ENCODE measurements at regions of chr12 and their contacts with region 1.

Region 1: GRCh38 chr12:8078398-8078797 is 3.7 kb upstream of the NECAP1 start:
- DNase-seq: peak; percentile 56
- ATAC-seq: no peak
- H3K4me3 ChIP-seq: no peak overlapping the region
- H3K4me3 Mint-ChIP-seq: no peak overlapping the region
- H3K27ac ChIP-seq: no peak overlapping the region
- H3K27ac Mint-ChIP-seq: no peak overlapping the region
- H3K4me1 ChIP-seq: peaks cover 23 to 24% of the 10 kb centered on the region in 2 donors
- H3K4me1 Mint-ChIP-seq: peaks cover 38% of the 10 kb centered on the region
- H3K27me3 ChIP-seq: no peaks in the 10 kb centered on the region
- H3K27me3 Mint-ChIP-seq: no peaks in the 10 kb centered on the region
- CTCF ChIP-seq: peak; percentile 61

Region 2: DNA sequence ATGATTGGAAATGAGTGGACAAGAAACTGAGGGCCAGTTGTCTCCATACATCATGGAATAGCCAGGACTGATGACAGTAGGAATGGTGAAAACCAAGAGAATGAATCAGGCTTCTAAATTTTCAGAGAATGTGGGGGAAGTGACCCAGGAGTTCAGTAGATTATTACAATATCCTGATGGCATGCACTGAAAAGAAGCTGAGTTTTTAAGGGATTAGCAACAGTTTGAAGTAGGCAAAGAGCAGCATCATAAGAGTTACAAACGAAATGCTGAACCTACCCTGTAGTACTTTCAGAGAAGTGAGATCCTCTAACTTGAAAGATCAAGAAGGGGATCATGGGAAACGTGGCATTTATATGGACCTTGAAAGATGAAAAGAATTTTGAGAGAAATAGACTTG is 218.8 kb before region 1 on chr12:
- CTCF ChIA-PET with region 1: interaction called, 12 read pairs
- POLR2A ChIA-PET with region 1: no interaction called
- intact Hi-C with region 1: no loop called
- DNase-seq: no peak
- ATAC-seq: no peak
- H3K4me3 ChIP-seq: no peak overlapping the region
- H3K4me3 Mint-ChIP-seq: no peak overlapping the region
- H3K27ac ChIP-seq: no peak overlapping the region
- H3K27ac Mint-ChIP-seq: no peak overlapping the region
- H3K4me1 ChIP-seq: peaks cover 3 to 4% of the 10 kb centered on the region in 2 donors
- H3K4me1 Mint-ChIP-seq: peaks cover 9% of the 10 kb centered on the region
- H3K27me3 ChIP-seq: peaks cover 0 to 8% (median 0%) of the 10 kb centered on the region in 4 experiments
- H3K27me3 Mint-ChIP-seq: no peaks in the 10 kb centered on the region
- CTCF ChIP-seq: no peak

Region 3: DNA sequence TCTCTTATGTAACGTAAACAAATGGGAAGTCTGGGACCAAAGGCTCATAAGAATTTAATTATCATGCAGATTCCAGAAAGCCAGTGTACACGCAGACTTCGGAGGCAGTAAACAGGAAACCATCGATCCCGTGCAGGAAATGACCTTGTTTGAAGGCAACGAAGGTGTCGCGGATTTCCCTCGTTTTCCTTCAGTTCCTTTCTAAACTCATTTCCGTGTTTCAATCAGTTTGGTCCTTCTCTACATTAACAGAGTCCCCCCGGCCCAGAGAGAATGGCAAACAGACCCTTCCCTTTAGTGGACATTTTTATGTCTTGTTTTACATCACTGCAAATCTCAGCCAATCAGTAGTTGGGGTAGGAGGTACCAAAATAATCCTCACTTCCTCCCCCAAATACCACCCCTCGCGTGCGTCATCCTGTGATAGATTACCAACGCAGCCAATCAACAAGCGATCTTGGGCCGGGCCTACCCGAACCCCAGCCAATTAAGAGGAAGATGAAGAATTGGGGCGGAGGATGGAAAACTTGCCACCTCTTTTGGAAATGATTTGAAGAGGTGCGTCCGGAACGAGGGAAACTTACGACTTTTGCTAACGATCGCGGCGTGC is 52.0 kb before region 1 on chr12:
- CTCF ChIA-PET with region 1: no interaction called
- POLR2A ChIA-PET with region 1: interaction called, 4 read pairs
- intact Hi-C with region 1: loop called (anchors 1 kb)
- DNase-seq: peak; percentile 98
- ATAC-seq: peak; percentile 95
- H3K4me3 ChIP-seq: peak overlapping the region; percentile 92 to 99 (median 98)
- H3K4me3 Mint-ChIP-seq: peak overlapping the region; percentile 97
- H3K27ac ChIP-seq: peak overlapping the region; percentile 99 to 100
- H3K27ac Mint-ChIP-seq: peak overlapping the region; percentile 100
- H3K4me1 ChIP-seq: peaks cover 4 to 8% of the 10 kb centered on the region in 2 donors
- H3K4me1 Mint-ChIP-seq: peaks cover 11% of the 10 kb centered on the region
- H3K27me3 ChIP-seq: no peaks in the 10 kb centered on the region
- H3K27me3 Mint-ChIP-seq: no peaks in the 10 kb centered on the region
- CTCF ChIP-seq: no peak

Region 4: GRCh38 chr12:8032242-8033152 is 45.9 kb before region 1 on chr12 and contains the start of gene FOXJ2:
- CTCF ChIA-PET with region 1: interaction called, 3 read pairs
- POLR2A ChIA-PET with region 1: interaction called, 4 read pairs
- intact Hi-C with region 1: loop called (anchors 1 kb)
- DNase-seq: peak; percentile 86
- ATAC-seq: peak; percentile 89
- H3K4me3 ChIP-seq: peak within 1 kb of the TSS; percentile 22 to 97 (median 86)
- H3K4me3 Mint-ChIP-seq: peak within 1 kb of the TSS; percentile 90
- H3K27ac ChIP-seq: peak within 1 kb of the TSS; percentile 60 to 86
- H3K27ac Mint-ChIP-seq: peak within 1 kb of the TSS; percentile 89
- H3K4me1 ChIP-seq: peaks cover 42 to 55% of the 10 kb centered on the region in 2 donors
- H3K4me1 Mint-ChIP-seq: peaks cover 47% of the 10 kb centered on the region
- H3K27me3 ChIP-seq: no peaks in the 10 kb centered on the region
- H3K27me3 Mint-ChIP-seq: no peaks in the 10 kb centered on the region
- CTCF ChIP-seq: no peak
- total RNA-seq, gene FOXJ2: 19.4 and 22.0 TPM in 2 replicates

Region 5: GRCh38 chr12:8040791-8041190 is 37.6 kb before region 1 on chr12:
- CTCF ChIA-PET with region 1: interaction called, 40 read pairs
- POLR2A ChIA-PET with region 1: interaction called, 3 read pairs
- intact Hi-C with region 1: no loop called
- DNase-seq: no peak
- ATAC-seq: no peak
- H3K4me3 ChIP-seq: no peak overlapping the region
- H3K4me3 Mint-ChIP-seq: no peak overlapping the region
- H3K27ac ChIP-seq: no peak overlapping the region
- H3K27ac Mint-ChIP-seq: no peak overlapping the region
- H3K4me1 ChIP-seq: peaks cover 36 to 39% of the 10 kb centered on the region in 2 donors
- H3K4me1 Mint-ChIP-seq: peaks cover 45% of the 10 kb centered on the region
- H3K27me3 ChIP-seq: no peaks in the 10 kb centered on the region
- H3K27me3 Mint-ChIP-seq: no peaks in the 10 kb centered on the region
- CTCF ChIP-seq: no peak

Region 6: DNA sequence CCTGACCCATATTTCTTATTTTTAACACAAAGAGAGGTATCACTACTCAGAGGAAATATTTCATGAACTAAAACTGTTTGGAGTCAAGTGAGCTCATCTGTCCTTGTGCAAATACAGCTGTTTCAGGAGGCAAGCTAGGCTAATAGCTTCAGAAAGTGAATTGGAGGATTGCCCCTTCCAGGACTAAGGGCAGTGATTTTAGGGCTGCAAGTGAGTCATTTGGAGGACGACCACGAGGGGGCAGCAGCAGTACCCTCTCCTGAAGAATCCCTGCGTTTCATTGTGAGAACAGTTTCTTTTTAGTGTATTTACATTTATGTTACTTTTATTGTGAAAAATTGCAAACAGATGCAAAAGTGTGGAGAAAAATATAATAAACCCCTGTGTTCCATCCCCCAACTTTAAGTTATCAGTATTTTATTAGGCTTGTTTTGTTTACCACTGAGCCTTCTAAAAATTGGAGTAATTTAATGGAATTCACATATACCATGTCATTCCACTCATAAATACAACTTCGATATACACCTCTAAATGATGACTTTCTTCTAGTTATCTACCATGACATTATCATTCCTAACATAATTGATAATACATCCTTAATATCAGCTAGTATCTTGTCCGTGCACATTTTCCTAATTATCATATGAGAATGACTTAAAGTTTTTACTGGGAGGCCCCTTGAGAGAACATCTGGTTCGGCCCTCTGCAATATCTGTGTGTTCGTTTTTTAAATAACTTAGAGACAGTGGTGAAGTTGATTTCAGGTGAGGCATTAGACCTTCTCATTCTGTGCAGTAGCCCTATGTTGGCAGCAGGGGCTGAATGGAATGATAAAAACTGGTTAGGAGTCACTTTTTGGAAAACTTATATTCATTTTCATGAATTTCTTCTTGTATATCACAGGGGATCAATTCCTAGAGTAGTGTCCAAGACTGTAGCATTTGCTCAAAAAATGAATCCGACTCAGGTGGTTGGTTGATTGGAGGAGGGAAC is 32.1 kb before region 1 on chr12:
- CTCF ChIA-PET with region 1: interaction called, 40 read pairs
- POLR2A ChIA-PET with region 1: no interaction called
- intact Hi-C with region 1: loop called (anchors 1 kb)
- DNase-seq: peak; percentile 79
- ATAC-seq: peak; percentile 64
- H3K4me3 ChIP-seq: no peak overlapping the region
- H3K4me3 Mint-ChIP-seq: no peak overlapping the region
- H3K27ac ChIP-seq: no peak overlapping the region
- H3K27ac Mint-ChIP-seq: no peak overlapping the region
- H3K4me1 ChIP-seq: peaks cover 6 to 10% of the 10 kb centered on the region in 2 donors
- H3K4me1 Mint-ChIP-seq: peaks cover 16% of the 10 kb centered on the region
- H3K27me3 ChIP-seq: no peaks in the 10 kb centered on the region
- H3K27me3 Mint-ChIP-seq: no peaks in the 10 kb centered on the region
- CTCF ChIP-seq: peak; percentile 96

Region 7: GRCh38 chr12:8226355-8226754 is 148.0 kb after region 1 on chr12:
- CTCF ChIA-PET with region 1: no interaction called
- POLR2A ChIA-PET with region 1: no interaction called
- intact Hi-C with region 1: no loop called
- DNase-seq: no peak
- ATAC-seq: no peak
- H3K4me3 ChIP-seq: no peak overlapping the region
- H3K4me3 Mint-ChIP-seq: no peak overlapping the region
- H3K27ac ChIP-seq: no peak overlapping the region
- H3K27ac Mint-ChIP-seq: no peak overlapping the region
- H3K4me1 ChIP-seq: no peaks in the 10 kb centered on the region
- H3K4me1 Mint-ChIP-seq: peaks cover 2% of the 10 kb centered on the region
- H3K27me3 ChIP-seq: no peaks in the 10 kb centered on the region
- H3K27me3 Mint-ChIP-seq: no peaks in the 10 kb centered on the region
- CTCF ChIP-seq: no peak